AG04449 (cell line): ENCODE measurements at regions of chr15 and their contacts with region 1.

Region 1: GRCh38 chr15:63048115-63048775 is 5.7 kb downstream of the TPM1 start:
- DNase-seq: no peak
- H3K4me3 ChIP-seq: peak overlapping the region; percentile 91
- CTCF ChIP-seq: peak; percentile 93

Region 2: GRCh38 chr15:62782039-62782791 is 266.0 kb before region 1 on chr15:
- CTCF ChIA-PET with region 1: interaction called, 31 read pairs
- POLR2A ChIA-PET with region 1: interaction called, 25 read pairs
- DNase-seq: peak; percentile 70
- H3K4me3 ChIP-seq: no peak overlapping the region
- CTCF ChIP-seq: peak; percentile 76

Region 3: DNA sequence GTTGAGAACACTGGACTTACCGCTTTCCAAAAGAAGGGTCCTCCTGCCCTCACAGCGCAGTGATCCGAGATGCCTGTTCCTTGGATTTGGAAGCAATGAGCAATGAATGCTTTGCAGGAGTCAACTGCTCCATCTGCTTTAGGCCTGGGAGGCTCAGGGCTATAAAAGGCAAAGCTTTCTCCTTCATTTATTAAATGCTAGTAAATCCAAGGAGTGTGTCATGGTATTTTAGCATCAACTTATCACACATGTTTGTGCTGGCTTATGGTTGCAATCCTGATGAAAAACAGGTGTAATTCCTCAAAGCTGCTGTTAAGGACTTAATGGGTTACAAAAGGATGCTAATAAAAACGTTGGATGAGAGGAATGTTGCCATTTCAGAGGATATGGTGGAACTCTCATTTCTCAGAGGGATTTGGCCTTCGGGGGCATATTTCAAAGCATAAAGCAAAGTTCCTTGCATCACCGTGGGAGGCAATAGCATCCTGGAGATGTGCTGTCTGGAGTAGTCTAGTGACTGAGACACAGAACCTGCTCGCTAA is 164.2 kb before region 1 on chr15:
- CTCF ChIA-PET with region 1: interaction called, 9 read pairs
- POLR2A ChIA-PET with region 1: interaction called, 10 read pairs
- DNase-seq: peak; percentile 89
- H3K4me3 ChIP-seq: no peak overlapping the region
- CTCF ChIP-seq: no peak

Region 4: GRCh38 chr15:62928242-62928995 is 119.8 kb before region 1 on chr15:
- CTCF ChIA-PET with region 1: interaction called, 10 read pairs
- POLR2A ChIA-PET with region 1: interaction called, 99 read pairs
- DNase-seq: peak; percentile 89
- H3K4me3 ChIP-seq: no peak overlapping the region; the same call in 1 of the 2 replicates
- CTCF ChIP-seq: peak; percentile 44

Region 5: DNA sequence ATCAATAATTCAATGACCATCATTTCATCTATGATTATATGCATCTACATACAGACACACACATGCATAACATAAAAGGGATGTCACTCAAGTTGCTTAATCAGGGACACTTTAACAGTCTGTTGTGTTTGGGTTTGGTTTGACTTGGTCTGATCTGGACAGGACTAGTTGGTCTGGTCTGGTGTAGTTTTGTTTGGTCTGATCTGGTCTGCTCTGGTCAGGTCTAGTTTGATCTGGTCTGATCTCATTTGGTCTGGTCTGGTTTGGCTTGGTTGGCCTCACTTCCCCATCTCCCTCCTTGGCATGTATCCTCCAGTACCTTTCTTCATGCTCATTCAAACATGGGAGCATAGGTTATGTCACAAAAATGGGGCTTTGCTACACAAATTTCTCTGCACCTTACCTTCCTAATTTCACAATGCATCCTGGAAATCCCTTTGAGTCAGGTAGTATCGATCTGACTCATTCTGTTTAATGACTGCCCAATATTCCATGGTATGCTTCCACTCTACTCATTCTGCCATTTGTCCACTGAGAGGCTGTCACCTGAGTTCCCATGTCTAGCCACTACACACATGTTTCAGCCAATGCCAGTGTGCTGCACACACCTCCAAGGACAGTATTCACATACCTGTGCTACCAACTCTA is 78.7 kb before region 1 on chr15:
- CTCF ChIA-PET with region 1: no interaction called
- POLR2A ChIA-PET with region 1: no interaction called
- DNase-seq: no peak
- H3K4me3 ChIP-seq: no peak overlapping the region
- CTCF ChIP-seq: no peak

Region 6: DNA sequence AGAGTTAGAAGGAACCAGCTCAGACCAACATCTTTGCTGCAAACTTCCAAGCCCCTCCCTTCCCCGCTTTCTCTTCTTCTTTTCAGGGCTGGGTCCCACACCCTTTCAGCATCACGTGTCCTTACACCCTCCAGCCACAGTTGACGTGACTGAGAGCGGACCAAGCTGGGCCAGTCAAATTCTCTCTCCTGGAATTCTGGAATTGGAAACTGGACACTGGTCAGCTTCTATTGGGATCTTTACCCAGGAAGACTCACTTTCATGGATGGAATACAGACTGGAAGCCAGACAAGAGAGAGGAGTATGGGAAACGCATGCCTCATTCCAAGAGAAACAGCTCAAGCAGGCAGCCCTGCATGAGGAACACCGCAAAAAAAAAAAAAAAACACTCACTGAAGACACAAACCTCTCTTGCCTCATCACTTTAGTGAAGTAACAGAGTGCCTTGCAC is 18.1 kb before region 1 on chr15:
- CTCF ChIA-PET with region 1: interaction called, 3 read pairs
- POLR2A ChIA-PET with region 1: interaction called, 17 read pairs
- DNase-seq: no peak
- H3K4me3 ChIP-seq: no peak overlapping the region
- CTCF ChIP-seq: no peak

Region 7: DNA sequence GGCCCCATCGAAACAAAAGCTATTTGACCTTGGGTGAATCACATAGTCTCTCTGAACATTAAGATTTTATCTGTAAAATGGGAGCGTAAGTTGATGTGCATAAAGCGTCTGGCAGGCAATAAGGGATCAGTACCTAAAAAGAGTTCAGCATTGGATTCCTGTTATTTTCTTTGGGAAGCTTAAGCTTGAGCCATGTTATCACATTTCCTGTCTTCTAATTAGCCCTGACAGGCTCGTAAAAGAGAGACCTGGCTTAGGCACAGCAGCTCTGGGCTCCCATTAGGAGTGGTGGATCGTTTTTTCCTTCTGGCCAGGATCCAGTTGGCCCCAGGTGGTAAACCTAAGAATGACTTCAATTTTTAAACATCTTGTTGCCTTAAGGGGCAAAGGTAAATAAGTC is 359.4 kb after region 1 on chr15:
- CTCF ChIA-PET with region 1: no interaction called
- POLR2A ChIA-PET with region 1: no interaction called
- DNase-seq: no peak
- H3K4me3 ChIP-seq: no peak overlapping the region
- CTCF ChIP-seq: no peak